ENCODE measurements at regions of chr13 and their contacts with region 1.

Region 1: GRCh38 chr13:41668130-41668757 is 210.9 kb downstream of the RGCC start:
- DNase-seq: peak; percentile 37
- ATAC-seq: peak; percentile 92
- H3K4me3 Mint-ChIP-seq: no peak overlapping the region
- H3K27ac Mint-ChIP-seq: no peak overlapping the region
- H3K4me1 Mint-ChIP-seq: no peaks in the 10 kb centered on the region
- H3K27me3 Mint-ChIP-seq: no peaks in the 10 kb centered on the region

Region 2: DNA sequence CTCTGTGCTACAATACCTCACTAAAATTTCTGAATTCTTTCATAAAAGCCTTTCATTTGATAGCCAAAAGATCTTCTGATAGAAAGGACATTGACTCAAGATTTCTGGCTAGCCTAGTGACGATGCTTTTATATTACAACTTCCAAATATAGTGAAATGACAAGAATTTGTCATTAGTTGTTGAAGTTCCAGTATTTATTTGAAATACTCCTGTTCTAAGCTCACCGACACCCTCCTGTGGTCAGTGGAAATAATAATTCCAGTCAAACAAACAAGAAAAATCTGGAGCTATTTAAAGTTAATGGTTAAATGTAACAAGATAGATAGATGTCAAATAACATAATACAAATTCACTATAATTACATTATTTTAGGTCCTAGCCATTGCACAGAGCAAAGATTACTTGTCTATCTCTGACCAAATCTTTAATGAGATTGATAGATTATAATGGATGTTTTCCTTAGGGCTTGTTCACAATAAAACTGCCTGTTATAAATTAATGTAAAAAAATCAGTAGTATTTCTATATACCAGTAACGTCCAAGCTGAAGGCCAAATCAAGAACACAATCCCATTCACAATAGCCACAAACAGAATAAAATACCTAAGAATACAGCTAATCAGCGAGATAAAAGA is 15.4 kb before region 1 on chr13:
- CTCF ChIA-PET with region 1: interaction called, 30 read pairs
- POLR2A ChIA-PET with region 1: no interaction called
- intact Hi-C with region 1: no loop called
- DNase-seq: peak; percentile 55
- ATAC-seq: no peak
- H3K4me3 Mint-ChIP-seq: no peak overlapping the region
- H3K27ac Mint-ChIP-seq: no peak overlapping the region
- H3K4me1 Mint-ChIP-seq: peaks cover 23% of the 10 kb centered on the region
- H3K27me3 Mint-ChIP-seq: no peaks in the 10 kb centered on the region

Region 3: GRCh38 chr13:41678249-41678648 is 10.0 kb after region 1 on chr13:
- CTCF ChIA-PET with region 1: interaction called, 32 read pairs
- POLR2A ChIA-PET with region 1: interaction called, 3 read pairs
- intact Hi-C with region 1: no loop called
- DNase-seq: no peak
- ATAC-seq: no peak
- H3K4me3 Mint-ChIP-seq: no peak overlapping the region
- H3K27ac Mint-ChIP-seq: no peak overlapping the region
- H3K4me1 Mint-ChIP-seq: peaks cover 9% of the 10 kb centered on the region
- H3K27me3 Mint-ChIP-seq: no peaks in the 10 kb centered on the region

Region 4: GRCh38 chr13:41905600-41906254 is 237.5 kb after region 1 on chr13:
- CTCF ChIA-PET with region 1: interaction called, 8 read pairs
- POLR2A ChIA-PET with region 1: no interaction called
- intact Hi-C with region 1: loop called in 1 of 2 experiments (anchors 5 kb)
- DNase-seq: no peak
- ATAC-seq: peak; percentile 78
- H3K4me3 Mint-ChIP-seq: no peak overlapping the region
- H3K27ac Mint-ChIP-seq: peak overlapping the region; percentile 3
- H3K4me1 Mint-ChIP-seq: peaks cover 35% of the 10 kb centered on the region
- H3K27me3 Mint-ChIP-seq: no peaks in the 10 kb centered on the region

Region 5: GRCh38 chr13:41955605-41956004 is 287.4 kb after region 1 on chr13:
- CTCF ChIA-PET with region 1: no interaction called
- POLR2A ChIA-PET with region 1: no interaction called
- intact Hi-C with region 1: no loop called
- DNase-seq: no peak
- ATAC-seq: peak; percentile 40
- H3K4me3 Mint-ChIP-seq: no peak overlapping the region
- H3K27ac Mint-ChIP-seq: no peak overlapping the region
- H3K4me1 Mint-ChIP-seq: peaks cover 56% of the 10 kb centered on the region
- H3K27me3 Mint-ChIP-seq: no peaks in the 10 kb centered on the region

Region 6: DNA sequence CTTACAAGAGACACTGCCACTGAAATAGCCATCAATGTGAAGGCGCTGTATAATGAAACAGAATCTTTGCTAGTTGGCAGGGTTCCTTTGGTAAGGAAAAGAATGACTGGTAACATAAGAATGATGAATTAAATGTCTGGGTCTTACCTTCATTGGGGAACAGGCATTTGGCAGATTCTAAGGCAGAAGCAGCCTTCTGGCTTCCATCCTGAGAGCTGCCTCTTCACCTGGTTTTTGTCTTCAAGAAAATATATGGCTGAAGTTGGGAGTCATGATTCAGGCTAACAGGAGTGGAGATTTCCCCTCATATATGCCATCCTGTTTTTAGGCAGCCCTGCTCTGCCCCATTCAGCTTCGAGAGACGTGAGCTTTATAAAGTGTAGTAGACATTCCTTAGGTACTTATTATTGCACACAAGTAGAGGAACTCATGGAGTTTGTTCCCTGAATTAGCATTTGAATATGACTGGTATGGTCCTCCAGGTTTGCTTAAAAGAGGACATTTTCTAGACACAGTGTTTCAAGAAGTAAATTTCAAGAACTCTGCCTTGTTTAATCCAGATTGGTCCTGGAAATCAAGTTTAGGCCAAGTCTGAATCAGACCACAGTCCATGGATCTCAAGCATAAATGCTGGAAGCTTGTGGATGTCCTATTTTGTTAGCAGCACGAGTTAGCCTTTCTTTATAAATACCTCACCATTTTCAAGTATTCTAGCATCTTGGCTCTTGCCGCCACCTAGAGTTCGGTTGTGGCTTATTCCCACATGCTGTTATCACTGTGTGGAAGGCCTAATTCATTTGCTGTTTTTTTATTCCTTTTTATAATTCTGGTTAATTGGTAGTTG is 547.6 kb after region 1 on chr13:
- CTCF ChIA-PET with region 1: no interaction called
- POLR2A ChIA-PET with region 1: no interaction called
- intact Hi-C with region 1: loop called in 1 of 2 experiments (anchors 5 kb)
- DNase-seq: peak; percentile 50
- ATAC-seq: peak; percentile 57
- H3K4me3 Mint-ChIP-seq: no peak overlapping the region
- H3K27ac Mint-ChIP-seq: no peak overlapping the region
- H3K4me1 Mint-ChIP-seq: peaks cover 2% of the 10 kb centered on the region
- H3K27me3 Mint-ChIP-seq: no peaks in the 10 kb centered on the region